Endothelial cell of umbilical vein (primary cell): ENCODE measurements at regions of chr2 and their contacts with region 1.

Region 1: GRCh38 chr2:34096562-34097171 is 497.6 kb upstream of the FAM98A start:
- DNase-seq: peak; percentile 74
- H3K4me3 ChIP-seq: no peak overlapping the region
- H3K27ac ChIP-seq: no peak overlapping the region
- H3K4me1 ChIP-seq: no peaks in the 10 kb centered on the region
- H3K27me3 ChIP-seq: no peaks in the 10 kb centered on the region
- CTCF ChIP-seq: peak; percentile 52 to 59
- POLR2A ChIP-seq: no peak

Region 2: GRCh38 chr2:33673937-33674336 is 422.7 kb before region 1 on chr2:
- CTCF ChIA-PET with region 1: interaction called, 3 read pairs
- POLR2A ChIA-PET with region 1: no interaction called
- dilution Hi-C with region 1: no loop called
- intact Hi-C with region 1: loop called (anchors 5 kb)
- DNase-seq: peak; percentile 32
- H3K4me3 ChIP-seq: no peak overlapping the region
- H3K27ac ChIP-seq: no peak overlapping the region
- H3K4me1 ChIP-seq: no peaks in the 10 kb centered on the region
- H3K27me3 ChIP-seq: no peaks in the 10 kb centered on the region
- CTCF ChIP-seq: peak; percentile 8 to 18
- POLR2A ChIP-seq: no peak

Region 3: GRCh38 chr2:34115076-34115475 is 18.4 kb after region 1 on chr2:
- CTCF ChIA-PET with region 1: no interaction called
- POLR2A ChIA-PET with region 1: no interaction called
- dilution Hi-C with region 1: no loop called
- intact Hi-C with region 1: no loop called
- DNase-seq: no peak
- H3K4me3 ChIP-seq: no peak overlapping the region
- H3K27ac ChIP-seq: no peak overlapping the region
- H3K4me1 ChIP-seq: no peaks in the 10 kb centered on the region
- H3K27me3 ChIP-seq: no peaks in the 10 kb centered on the region
- CTCF ChIP-seq: no peak
- POLR2A ChIP-seq: no peak

Region 4: GRCh38 chr2:35343135-35343534 is 1246.5 kb after region 1 on chr2:
- CTCF ChIA-PET with region 1: interaction called, 3 read pairs
- POLR2A ChIA-PET with region 1: no interaction called
- dilution Hi-C with region 1: no loop called
- intact Hi-C with region 1: loop called (anchors 1 kb)
- DNase-seq: peak; percentile 2
- H3K4me3 ChIP-seq: no peak overlapping the region
- H3K27ac ChIP-seq: no peak overlapping the region
- H3K4me1 ChIP-seq: no peaks in the 10 kb centered on the region
- H3K27me3 ChIP-seq: no peaks in the 10 kb centered on the region
- CTCF ChIP-seq: peak; percentile 32 to 43
- POLR2A ChIP-seq: no peak

Region 5: DNA sequence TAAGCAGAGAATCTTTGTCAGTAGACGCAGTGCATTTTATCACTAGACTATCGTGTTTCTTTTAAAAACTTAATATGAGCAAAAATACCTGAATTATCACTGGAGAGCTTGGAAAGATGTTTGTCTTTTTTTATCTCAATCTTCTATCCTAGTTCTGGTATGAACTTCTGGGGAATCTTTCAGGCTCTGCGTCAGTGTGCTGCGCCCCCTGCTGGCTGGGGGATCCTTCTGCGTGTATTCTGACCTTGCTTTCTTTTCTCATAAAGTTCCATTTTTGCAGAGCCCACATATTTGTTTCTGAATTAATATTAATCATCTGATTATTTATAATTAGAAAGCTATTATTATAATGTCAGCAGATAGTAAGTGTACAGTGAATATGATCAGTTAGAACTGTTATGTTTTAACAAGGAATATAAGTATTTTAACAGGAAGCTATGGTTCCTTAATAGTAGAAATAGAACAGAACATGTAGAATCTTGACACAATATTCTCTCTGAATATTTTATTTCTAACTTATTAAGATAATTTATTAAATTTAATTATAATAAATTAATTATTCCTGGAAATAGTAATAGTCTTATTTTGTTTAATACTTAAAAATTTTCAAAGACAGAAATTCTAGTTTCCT is 1313.9 kb after region 1 on chr2:
- CTCF ChIA-PET with region 1: interaction called, 54 read pairs
- POLR2A ChIA-PET with region 1: no interaction called
- dilution Hi-C with region 1: no loop called
- intact Hi-C with region 1: loop called (anchors 1 kb)
- DNase-seq: peak; percentile 55
- H3K4me3 ChIP-seq: no peak overlapping the region
- H3K27ac ChIP-seq: no peak overlapping the region
- H3K4me1 ChIP-seq: no peaks in the 10 kb centered on the region
- H3K27me3 ChIP-seq: no peaks in the 10 kb centered on the region
- CTCF ChIP-seq: peak; percentile 86 to 93
- POLR2A ChIP-seq: no peak

Region 6: GRCh38 chr2:35428548-35428947 is 1331.9 kb after region 1 on chr2:
- CTCF ChIA-PET with region 1: interaction called, 7 read pairs
- POLR2A ChIA-PET with region 1: no interaction called
- dilution Hi-C with region 1: no loop called
- intact Hi-C with region 1: loop called (anchors 1 kb)
- DNase-seq: peak; percentile 22
- H3K4me3 ChIP-seq: no peak overlapping the region
- H3K27ac ChIP-seq: no peak overlapping the region
- H3K4me1 ChIP-seq: no peaks in the 10 kb centered on the region
- H3K27me3 ChIP-seq: peaks cover 2% of the 10 kb centered on the region in 2 experiments
- CTCF ChIP-seq: peak; percentile 56 to 65
- POLR2A ChIP-seq: no peak

Region 7: DNA sequence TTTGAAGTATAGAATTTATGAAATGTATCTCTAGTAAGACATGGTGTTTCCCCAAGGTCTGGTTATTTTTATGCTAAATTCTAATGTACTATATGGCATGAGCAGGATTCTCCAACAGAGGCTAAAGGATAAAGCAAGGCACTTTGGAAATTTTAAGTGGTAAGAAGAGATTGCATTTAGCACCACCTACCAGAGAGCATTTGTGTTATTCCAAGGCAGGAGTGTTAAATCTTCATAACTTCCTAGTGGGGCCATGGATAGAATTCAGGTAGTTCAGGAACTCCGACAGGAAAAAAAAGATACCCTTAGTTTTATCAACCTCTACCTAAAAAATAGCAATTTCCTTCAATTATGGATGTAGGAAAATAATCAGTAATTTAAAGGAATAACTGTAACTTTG is 1761.5 kb after region 1 on chr2:
- CTCF ChIA-PET with region 1: interaction called, 5 read pairs
- POLR2A ChIA-PET with region 1: no interaction called
- dilution Hi-C with region 1: no loop called
- intact Hi-C with region 1: loop called (anchors 5 kb)
- DNase-seq: no peak
- H3K4me3 ChIP-seq: no peak overlapping the region
- H3K27ac ChIP-seq: no peak overlapping the region
- H3K4me1 ChIP-seq: no peaks in the 10 kb centered on the region
- H3K27me3 ChIP-seq: no peaks in the 10 kb centered on the region
- CTCF ChIP-seq: no peak
- POLR2A ChIP-seq: no peak